Activated CD4-positive, alpha-beta memory T cell treated with anti-CD3 and anti-CD28 coated beads, Interleukin-2, amount 10 ng/mL, durations not matched to agents 7 days and 5 days (primary cell): ENCODE measurements at regions of chr16 and their contacts with region 1.

Region 1: DNA sequence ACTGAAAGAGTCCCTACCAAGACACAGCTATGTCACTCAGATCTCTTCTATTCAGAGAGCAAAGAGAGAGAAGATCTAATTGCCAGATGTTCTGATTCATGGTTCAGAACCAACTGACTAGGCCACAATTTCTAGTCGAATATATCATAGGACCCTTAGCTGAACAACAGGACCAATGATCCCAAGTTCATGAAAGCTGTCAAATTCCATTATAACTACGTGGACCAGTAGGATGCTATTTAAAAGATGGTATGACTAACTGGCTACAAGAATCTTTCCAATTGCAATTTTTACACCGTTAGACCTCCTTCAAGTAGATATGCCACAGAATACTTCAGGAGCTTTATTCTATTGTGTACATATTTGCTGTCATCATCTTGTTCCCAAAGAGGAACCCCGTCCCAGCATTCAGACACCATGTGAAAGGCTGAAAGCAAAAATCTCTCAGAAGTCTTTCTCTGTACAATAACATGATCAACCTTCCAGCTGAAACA is 26.0 kb downstream of the DCUN1D3 start:
- DNase-seq: no peak
- H3K4me3 Mint-ChIP-seq: peak overlapping the region; percentile 54
- H3K27ac Mint-ChIP-seq: peak overlapping the region; percentile 93
- H3K4me1 Mint-ChIP-seq: peaks cover 76% of the 10 kb centered on the region
- H3K27me3 Mint-ChIP-seq: no peaks in the 10 kb centered on the region

Region 2: DNA sequence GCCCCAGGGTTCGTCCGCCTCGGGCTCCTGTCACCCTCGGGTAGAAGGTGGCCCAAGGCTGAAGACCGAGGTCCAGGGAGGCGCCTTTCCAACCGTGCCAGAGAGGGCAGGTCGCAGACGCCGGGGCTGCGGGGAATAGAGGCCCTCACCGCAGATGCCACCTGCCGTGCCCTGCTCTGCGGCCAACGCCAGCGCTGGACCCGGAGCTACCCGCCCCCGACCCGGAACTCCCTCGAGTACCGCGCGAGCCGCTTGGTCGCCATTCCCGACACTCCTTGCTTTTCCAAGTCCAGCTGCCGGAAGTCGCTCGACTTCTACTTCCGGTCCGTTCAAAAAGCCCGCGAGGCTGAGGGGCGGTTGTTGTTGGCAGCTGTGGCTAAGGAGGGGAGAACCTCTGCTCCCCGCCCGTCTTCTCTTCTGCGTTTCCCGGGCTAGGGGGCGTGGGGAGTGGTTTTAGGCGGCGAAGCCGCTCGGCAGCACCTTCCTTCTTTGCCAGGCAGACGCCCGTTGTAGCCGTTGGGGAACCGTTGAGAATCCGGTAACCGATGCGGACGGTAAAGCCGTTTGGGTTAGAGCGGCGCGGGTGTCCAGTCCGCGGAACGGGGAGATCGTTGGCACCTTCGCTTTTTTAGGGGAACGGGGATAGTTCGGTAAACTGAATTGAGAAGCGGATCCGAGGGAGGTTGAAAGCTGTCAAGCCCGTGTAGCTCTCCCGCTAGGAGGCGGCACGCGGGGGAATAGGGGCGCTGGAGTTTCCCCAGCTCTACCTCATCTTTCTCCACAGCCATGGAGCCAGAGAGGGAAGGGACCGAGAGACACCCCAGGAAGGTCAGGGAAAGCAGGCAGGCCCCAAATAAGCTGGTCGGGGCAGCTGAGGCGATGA is 67.7 kb before region 1 on chr16 and contains the starts of genes ERI2 and REXO5:
- CTCF ChIA-PET with region 1: interaction called, 3 read pairs
- POLR2A ChIA-PET with region 1: interaction called, 18 read pairs
- DNase-seq: peak; percentile 79
- H3K4me3 Mint-ChIP-seq: peak within 1 kb of the TSS; percentile 97
- H3K27ac Mint-ChIP-seq: peak within 1 kb of the TSS; percentile 93
- H3K4me1 Mint-ChIP-seq: peaks cover 51% of the 10 kb centered on the region
- H3K27me3 Mint-ChIP-seq: no peaks in the 10 kb centered on the region
- total RNA-seq, gene ERI2: 12.4 to 13.2 TPM
- total RNA-seq, gene REXO5: 16.2 to 17.4 TPM

Region 3: DNA sequence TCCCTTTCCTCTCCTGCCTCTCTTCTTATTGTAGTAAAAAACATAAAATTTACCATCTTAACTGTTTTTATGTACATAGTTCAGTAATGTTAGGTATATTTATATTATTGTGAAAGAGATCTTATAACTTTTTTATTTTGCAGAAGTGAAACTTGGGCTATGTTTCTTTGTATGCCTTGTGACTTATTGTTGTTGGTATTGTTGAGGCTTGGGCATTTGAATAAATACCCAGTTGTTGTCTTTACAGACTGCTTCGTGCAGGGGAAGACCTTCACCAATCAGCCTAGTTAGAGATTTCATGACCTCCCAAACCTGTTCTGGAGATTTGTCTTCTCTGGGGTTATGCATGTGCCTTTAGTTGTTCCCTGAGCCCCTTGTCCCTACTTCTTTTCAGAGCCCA is 35.9 kb before region 1 on chr16:
- CTCF ChIA-PET with region 1: no interaction called
- POLR2A ChIA-PET with region 1: no interaction called
- DNase-seq: no peak
- H3K4me3 Mint-ChIP-seq: no peak overlapping the region
- H3K27ac Mint-ChIP-seq: no peak overlapping the region
- H3K4me1 Mint-ChIP-seq: peaks cover 2% of the 10 kb centered on the region
- H3K27me3 Mint-ChIP-seq: no peaks in the 10 kb centered on the region

Region 4: DNA sequence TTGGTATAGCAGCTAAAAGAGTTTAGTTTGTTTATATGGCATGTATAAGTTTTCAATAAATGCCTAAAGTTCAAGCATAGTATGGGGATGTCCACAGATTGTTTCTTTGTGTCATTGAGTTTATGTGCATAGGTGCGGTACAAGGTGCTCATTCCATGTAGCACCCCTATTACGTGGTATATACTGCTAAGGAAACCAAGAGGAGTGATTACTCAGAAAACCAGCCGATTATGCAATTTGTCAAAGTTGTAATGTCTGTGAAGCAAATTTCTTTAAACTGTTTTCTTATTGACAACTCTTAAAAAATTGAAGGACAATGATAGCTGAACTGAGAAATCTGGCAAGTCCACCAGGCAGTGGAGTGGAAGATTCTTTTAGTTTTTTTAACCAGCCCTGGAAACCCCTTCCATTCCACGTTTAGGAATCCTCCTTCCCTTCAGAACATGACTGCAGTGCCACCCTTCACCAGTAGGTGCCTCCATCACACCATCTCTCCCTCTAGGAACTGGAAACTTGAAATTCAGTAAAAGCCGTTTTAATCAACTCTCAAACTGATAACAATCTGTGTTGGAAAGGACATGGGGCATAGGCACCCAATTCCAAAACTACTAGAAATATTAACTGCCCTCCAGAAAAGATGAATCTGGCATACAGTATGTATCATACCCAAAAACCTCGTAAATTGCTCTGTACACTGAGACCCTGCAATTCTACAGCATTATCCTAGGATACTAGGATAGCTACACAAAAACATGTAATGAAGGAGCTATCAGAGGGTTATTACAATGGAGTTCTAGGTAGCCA is 24.3 kb before region 1 on chr16:
- CTCF ChIA-PET with region 1: interaction called, 32 read pairs
- POLR2A ChIA-PET with region 1: interaction called, 6 read pairs
- DNase-seq: peak; percentile 69
- H3K4me3 Mint-ChIP-seq: no peak overlapping the region
- H3K27ac Mint-ChIP-seq: no peak overlapping the region
- H3K4me1 Mint-ChIP-seq: peaks cover 46% of the 10 kb centered on the region
- H3K27me3 Mint-ChIP-seq: no peaks in the 10 kb centered on the region

Region 5: DNA sequence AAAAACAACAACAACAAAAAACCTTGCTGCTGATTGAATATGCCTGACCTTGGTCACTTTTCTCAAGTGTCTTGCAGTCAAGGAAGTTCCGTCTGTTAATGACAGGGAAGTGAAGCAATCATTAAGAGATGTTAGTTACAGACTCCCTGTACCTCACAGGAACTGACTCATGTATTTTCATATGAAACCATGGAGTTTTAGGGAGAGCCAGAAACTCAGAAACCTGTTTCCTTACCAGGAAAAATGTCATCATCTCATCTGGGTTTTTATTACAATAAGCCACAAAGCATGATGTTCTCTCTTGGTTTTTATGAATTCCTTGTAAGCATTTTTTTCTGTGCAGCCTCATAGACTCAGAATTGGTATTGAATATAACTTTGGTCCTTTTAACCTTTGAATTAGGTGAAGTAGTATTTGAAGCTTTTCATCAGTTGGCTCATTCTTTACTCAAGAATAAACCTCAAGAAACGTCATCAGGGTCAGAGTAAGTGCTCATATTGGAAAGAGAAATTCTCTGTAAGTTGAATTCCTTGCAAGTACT is 36.7 kb after region 1 on chr16:
- CTCF ChIA-PET with region 1: interaction called, 5 read pairs
- POLR2A ChIA-PET with region 1: interaction called, 10 read pairs
- DNase-seq: no peak
- H3K4me3 Mint-ChIP-seq: peak overlapping the region; percentile 0
- H3K27ac Mint-ChIP-seq: peak overlapping the region; percentile 84
- H3K4me1 Mint-ChIP-seq: peaks cover 71% of the 10 kb centered on the region
- H3K27me3 Mint-ChIP-seq: no peaks in the 10 kb centered on the region

Region 6: DNA sequence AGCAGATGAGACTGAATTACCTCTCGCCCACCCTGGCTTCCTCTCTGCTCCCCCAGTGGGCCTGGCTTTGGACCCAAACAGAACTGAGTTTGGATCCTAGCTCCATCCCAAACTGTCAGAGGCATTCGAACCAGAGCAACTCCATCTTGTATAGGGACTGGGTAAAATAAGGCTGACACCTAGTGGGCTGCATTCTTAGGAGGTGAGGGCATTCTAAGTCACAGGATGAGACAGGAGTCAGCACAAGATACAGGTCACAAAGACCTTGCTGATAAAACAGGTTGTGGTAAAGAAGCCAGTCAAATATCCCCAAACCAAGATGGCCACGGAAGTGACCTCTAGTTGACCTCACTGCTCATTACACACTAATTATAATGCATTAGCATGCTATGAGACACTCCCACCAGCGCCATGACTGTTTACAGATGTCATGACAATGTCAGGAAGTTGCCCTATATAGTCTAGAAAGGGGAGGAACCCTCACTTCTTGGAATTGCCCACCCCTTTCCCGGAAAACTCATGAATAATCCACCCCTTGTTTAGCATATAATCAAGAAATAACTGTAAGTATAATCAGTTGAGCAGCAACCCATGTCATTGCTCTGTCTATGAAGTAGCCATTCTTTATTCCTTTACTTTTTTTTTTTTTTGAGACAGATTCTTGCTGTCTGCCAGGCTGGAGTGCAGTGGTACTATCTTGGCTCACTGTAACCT is 70.9 kb after region 1 on chr16:
- CTCF ChIA-PET with region 1: interaction called, 10 read pairs
- POLR2A ChIA-PET with region 1: interaction called, 4 read pairs
- DNase-seq: peak; percentile 83
- H3K4me3 Mint-ChIP-seq: no peak overlapping the region
- H3K27ac Mint-ChIP-seq: peak overlapping the region; percentile 71
- H3K4me1 Mint-ChIP-seq: peaks cover 57% of the 10 kb centered on the region
- H3K27me3 Mint-ChIP-seq: peaks cover 2% of the 10 kb centered on the region

Region 7: GRCh38 chr16:21083729-21084268 is 209.7 kb after region 1 on chr16:
- CTCF ChIA-PET with region 1: interaction called, 10 read pairs
- POLR2A ChIA-PET with region 1: no interaction called
- DNase-seq: peak; percentile 63
- H3K4me3 Mint-ChIP-seq: no peak overlapping the region
- H3K27ac Mint-ChIP-seq: no peak overlapping the region
- H3K4me1 Mint-ChIP-seq: peaks cover 2% of the 10 kb centered on the region
- H3K27me3 Mint-ChIP-seq: peaks cover 14% of the 10 kb centered on the region

Region 8: DNA sequence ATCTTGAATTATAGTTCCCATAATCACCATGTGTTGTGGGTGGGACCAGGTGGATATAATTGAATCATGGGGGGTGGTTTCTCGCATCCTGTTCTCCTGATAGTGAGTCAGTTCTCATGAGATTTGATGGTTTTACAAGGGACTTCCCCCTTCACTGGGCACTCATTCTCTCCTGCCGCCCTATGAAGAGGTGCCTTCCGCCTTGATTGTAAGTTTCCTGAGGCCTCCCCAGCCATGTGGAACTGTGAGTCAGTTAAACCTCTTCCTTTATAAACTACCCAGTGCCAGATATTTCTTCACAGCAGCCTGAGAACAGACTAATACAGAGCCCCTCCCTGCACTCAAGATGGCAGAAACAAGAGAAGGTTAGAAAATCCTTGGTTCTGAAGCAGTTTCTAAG is 310.7 kb after region 1 on chr16:
- CTCF ChIA-PET with region 1: no interaction called
- POLR2A ChIA-PET with region 1: no interaction called
- DNase-seq: no peak
- H3K4me3 Mint-ChIP-seq: no peak overlapping the region
- H3K27ac Mint-ChIP-seq: no peak overlapping the region
- H3K4me1 Mint-ChIP-seq: peaks cover 15% of the 10 kb centered on the region
- H3K27me3 Mint-ChIP-seq: peaks cover 2% of the 10 kb centered on the region